ENCODE measurements at regions of chr11 and their contacts with region 1.

Region 1: DNA sequence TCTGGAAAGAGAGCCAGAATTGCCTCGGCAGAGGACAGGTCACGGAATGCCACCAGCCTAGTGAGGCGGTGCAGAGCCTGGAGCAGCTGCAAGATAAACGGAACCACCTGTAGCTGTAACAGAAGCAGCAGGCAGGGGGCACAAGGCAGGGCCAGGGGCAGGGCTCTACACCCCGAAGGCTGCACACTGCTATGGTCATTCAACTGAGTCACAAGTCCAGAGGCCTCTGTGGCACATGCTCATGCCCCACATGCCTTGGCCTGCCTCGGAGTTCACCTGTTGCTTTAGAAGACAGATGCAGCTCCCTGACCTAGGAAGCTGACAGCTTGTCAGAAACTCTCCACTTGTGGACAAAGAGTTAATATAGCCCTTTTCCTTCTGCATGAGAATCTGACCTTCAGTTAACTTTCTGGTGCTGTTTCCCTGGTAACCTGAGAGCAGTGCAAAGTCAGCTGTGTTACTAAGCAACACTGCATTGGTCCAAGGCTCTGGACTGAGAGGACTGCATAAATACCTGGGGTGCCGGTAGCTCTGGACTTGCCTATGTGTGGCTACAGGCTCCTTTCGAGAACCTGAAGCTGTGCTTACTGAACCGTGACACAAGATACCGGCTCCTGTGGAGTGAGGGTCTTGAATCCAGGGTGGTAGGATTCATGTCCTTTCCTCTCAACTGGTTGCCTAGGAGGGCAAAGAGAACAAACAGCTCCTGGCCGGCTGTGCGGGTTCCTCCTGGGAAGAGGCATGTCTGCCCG is 10.5 kb downstream of the COMMD9 start:
- DNase-seq: no peak
- ATAC-seq: peak; percentile 19
- H3K4me3 ChIP-seq: no peak overlapping the region
- H3K27ac ChIP-seq: no peak overlapping the region
- H3K4me1 ChIP-seq: no peaks in the 10 kb centered on the region
- H3K27me3 ChIP-seq: no peaks in the 10 kb centered on the region

Region 2: GRCh38 chr11:35943713-35944655 is 334.7 kb before region 1 on chr11 and contains the start of gene LDLRAD3:
- intact Hi-C with region 1: loop called in 1 of 2 experiments (anchors 10 kb)
- DNase-seq: peak; percentile 88 to 94
- ATAC-seq: peak; percentile 89
- H3K4me3 ChIP-seq: peak within 1 kb of the TSS; percentile 62 to 69
- H3K27ac ChIP-seq: peak within 1 kb of the TSS in 1 of 2 donors; percentile 8
- H3K4me1 ChIP-seq: no peaks in the 10 kb centered on the region
- H3K27me3 ChIP-seq: no peaks in the 10 kb centered on the region
- total RNA-seq, gene LDLRAD3: 16.2 to 19.6 TPM

Region 3: DNA sequence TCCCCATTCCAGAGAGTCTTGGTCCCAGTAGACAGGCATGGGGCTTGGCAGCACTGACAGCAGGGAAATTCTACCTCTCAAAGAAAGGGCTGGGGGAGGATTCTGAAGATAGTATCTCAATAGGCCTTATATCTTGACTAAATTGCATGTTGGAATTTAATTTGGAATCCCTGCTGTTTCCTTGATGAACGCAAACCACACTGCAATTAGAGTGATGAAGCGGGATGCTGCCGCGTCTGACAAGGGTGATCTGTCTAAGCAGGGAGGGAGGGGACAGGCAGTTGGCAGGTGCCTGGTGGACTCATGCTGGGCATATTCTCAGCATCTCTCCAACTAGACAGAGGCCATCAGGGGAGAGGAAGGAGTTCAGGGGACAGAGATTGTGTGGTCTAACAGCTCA is 37.9 kb before region 1 on chr11:
- intact Hi-C with region 1: no loop called
- DNase-seq: no peak
- ATAC-seq: no peak
- H3K4me3 ChIP-seq: no peak overlapping the region
- H3K27ac ChIP-seq: no peak overlapping the region
- H3K4me1 ChIP-seq: no peaks in the 10 kb centered on the region
- H3K27me3 ChIP-seq: no peaks in the 10 kb centered on the region